IMR-90 (cell line): ENCODE measurements at regions of chr12 and their contacts with region 1.

Region 1: GRCh38 chr12:1583421-1584078 is 10.8 kb downstream of the FBXL14 start:
- DNase-seq: peak; percentile 93
- ATAC-seq: peak; percentile 63
- H3K4me3 ChIP-seq: no peak overlapping the region
- H3K27ac ChIP-seq: no peak overlapping the region
- H3K4me1 ChIP-seq: peaks cover 16% of the 10 kb centered on the region
- H3K27me3 ChIP-seq: no peaks in the 10 kb centered on the region
- CTCF ChIP-seq: peak; percentile 95
- POLR2A ChIP-seq: peak; percentile 27; the same call in 1 of the 2 replicates
- RAD21 ChIP-seq: peak; percentile 97

Region 2: GRCh38 chr12:818733-819132 is 764.8 kb before region 1 on chr12:
- CTCF ChIA-PET with region 1: no interaction called
- POLR2A ChIA-PET with region 1: no interaction called
- dilution Hi-C with region 1: no loop called
- in situ Hi-C with region 1: no loop called
- intact Hi-C with region 1: loop called (anchors 1 kb)
- DNase-seq: peak; percentile 13
- ATAC-seq: no peak; the same call in 1 of the 2 replicates
- H3K4me3 ChIP-seq: no peak overlapping the region
- H3K27ac ChIP-seq: no peak overlapping the region
- H3K4me1 ChIP-seq: no peaks in the 10 kb centered on the region
- H3K27me3 ChIP-seq: no peaks in the 10 kb centered on the region
- CTCF ChIP-seq: no peak; the same call in 1 of the 2 replicates
- POLR2A ChIP-seq: no peak
- RAD21 ChIP-seq: no peak

Region 3: GRCh38 chr12:990661-991349 is 592.7 kb before region 1 on chr12 and contains the start of gene ERC1:
- CTCF ChIA-PET with region 1: no interaction called
- POLR2A ChIA-PET with region 1: no interaction called
- dilution Hi-C with region 1: no loop called
- in situ Hi-C with region 1: no loop called
- intact Hi-C with region 1: loop called (anchors 10 kb)
- DNase-seq: peak; percentile 87
- ATAC-seq: peak; percentile 91
- H3K4me3 ChIP-seq: peak within 1 kb of the TSS; percentile 77
- H3K27ac ChIP-seq: peak within 1 kb of the TSS; percentile 96
- H3K4me1 ChIP-seq: peaks cover 8% of the 10 kb centered on the region
- H3K27me3 ChIP-seq: no peaks in the 10 kb centered on the region
- CTCF ChIP-seq: 0 out of 2 replicates have a peak, but pooled peaks have one; percentile 1
- POLR2A ChIP-seq: peak; percentile 92
- RAD21 ChIP-seq: no peak
- total RNA-seq, gene ERC1: 25.6 and 27.8 TPM in 2 replicates

Region 4: GRCh38 chr12:1204581-1205121 is 378.9 kb before region 1 on chr12:
- CTCF ChIA-PET with region 1: no interaction called
- POLR2A ChIA-PET with region 1: no interaction called
- dilution Hi-C with region 1: no loop called
- in situ Hi-C with region 1: no loop called
- intact Hi-C with region 1: loop called (anchors 5 kb)
- DNase-seq: no peak
- ATAC-seq: 0 out of 2 replicates have a peak, but pooled peaks have one; percentile 27
- H3K4me3 ChIP-seq: peak overlapping the region; percentile 36; the same call in 1 of the 2 replicates
- H3K27ac ChIP-seq: no peak overlapping the region; the same call in 1 of the 2 replicates
- H3K4me1 ChIP-seq: peaks cover 1% of the 10 kb centered on the region; the same call in 1 of the 2 replicates
- H3K27me3 ChIP-seq: no peaks in the 10 kb centered on the region
- CTCF ChIP-seq: no peak
- POLR2A ChIP-seq: no peak
- RAD21 ChIP-seq: no peak

Region 5: DNA sequence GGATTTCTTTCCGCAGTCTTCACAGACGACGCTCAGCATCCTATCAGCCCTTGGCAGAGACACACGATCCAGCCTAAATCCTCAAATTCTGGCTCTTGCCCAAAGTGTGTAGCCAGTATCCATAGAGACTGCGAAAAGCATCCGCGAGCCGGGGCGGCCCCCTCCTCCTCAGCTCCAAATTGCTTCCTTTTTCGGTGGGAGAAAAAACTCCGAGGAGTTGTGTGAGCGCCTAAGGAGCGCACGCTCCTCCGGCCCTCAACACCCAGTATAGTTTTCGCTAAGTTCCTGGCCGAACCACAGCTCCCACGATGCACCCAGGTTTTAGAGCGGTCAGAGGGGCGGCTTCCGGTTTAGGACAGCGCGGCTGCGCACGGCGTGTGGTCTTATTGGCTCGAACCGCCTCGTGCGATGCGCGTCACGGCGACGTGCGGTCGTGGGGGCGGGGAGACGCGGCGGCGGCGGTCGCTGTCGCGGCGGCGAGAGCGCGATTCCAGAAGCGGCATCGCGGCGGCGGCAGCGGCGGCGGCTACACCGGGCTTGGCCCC is 107.1 kb after region 1 on chr12 and contains the start of gene ADIPOR2:
- CTCF ChIA-PET with region 1: no interaction called
- POLR2A ChIA-PET with region 1: no interaction called
- dilution Hi-C with region 1: no loop called
- in situ Hi-C with region 1: no loop called
- intact Hi-C with region 1: no loop called
- DNase-seq: peak; percentile 96
- ATAC-seq: peak; percentile 100
- H3K4me3 ChIP-seq: peak within 1 kb of the TSS; percentile 70
- H3K27ac ChIP-seq: peak within 1 kb of the TSS; percentile 73
- H3K4me1 ChIP-seq: no peaks in the 10 kb centered on the region
- H3K27me3 ChIP-seq: no peaks in the 10 kb centered on the region
- CTCF ChIP-seq: no peak
- POLR2A ChIP-seq: peak; percentile 84
- RAD21 ChIP-seq: no peak
- total RNA-seq, gene ADIPOR2: 24.9 and 27.2 TPM in 2 replicates